ENCODE measurements at regions of chr10 and their contacts with region 1.

Region 1: DNA sequence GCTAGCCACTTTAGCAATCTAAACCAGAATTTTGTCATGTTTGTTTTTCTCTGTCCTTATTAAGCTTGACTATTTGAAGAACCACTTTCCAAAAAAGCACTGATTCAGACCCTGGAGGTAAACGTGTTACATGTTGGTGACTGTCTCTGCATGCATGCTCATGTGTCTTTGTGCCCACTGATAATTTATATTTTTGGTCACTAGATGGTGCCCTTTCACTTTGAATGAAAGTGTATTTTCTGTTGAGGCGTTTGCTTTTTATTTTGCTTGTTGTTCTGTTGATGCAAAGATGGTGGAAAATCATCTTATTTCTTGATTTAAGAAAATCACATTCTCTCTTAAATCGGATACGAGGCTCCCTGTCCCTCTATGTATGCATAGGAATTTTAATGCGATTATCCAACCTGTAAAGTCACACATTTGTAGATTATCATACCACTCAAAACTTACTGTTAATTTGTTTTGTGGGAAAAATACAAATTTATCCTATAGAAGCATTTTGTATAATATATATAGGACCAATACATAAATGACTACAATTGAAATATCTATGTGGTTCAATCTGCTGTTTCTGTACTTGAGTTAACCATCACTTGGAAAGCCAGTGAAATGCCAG is 269.3 kb downstream of the BICC1 start:
- DNase-seq: peak; percentile 63
- H3K4me3 ChIP-seq: no peak overlapping the region
- H3K27ac ChIP-seq: no peak overlapping the region
- H3K4me1 ChIP-seq: no peaks in the 10 kb centered on the region
- H3K27me3 ChIP-seq: no peaks in the 10 kb centered on the region
- CTCF ChIP-seq: peak; percentile 67

Region 2: GRCh38 chr10:58796242-58796641 is 14.3 kb after region 1 on chr10:
- CTCF ChIA-PET with region 1: no interaction called
- POLR2A ChIA-PET with region 1: no interaction called
- intact Hi-C with region 1: no loop called
- DNase-seq: no peak
- H3K4me3 ChIP-seq: no peak overlapping the region
- H3K27ac ChIP-seq: no peak overlapping the region
- H3K4me1 ChIP-seq: no peaks in the 10 kb centered on the region
- H3K27me3 ChIP-seq: no peaks in the 10 kb centered on the region
- CTCF ChIP-seq: no peak

Region 3: GRCh38 chr10:58952747-58953466 is 170.9 kb after region 1 on chr10:
- CTCF ChIA-PET with region 1: no interaction called
- POLR2A ChIA-PET with region 1: no interaction called
- intact Hi-C with region 1: loop called (anchors 5 kb)
- DNase-seq: peak; percentile 57
- H3K4me3 ChIP-seq: no peak overlapping the region
- H3K27ac ChIP-seq: no peak overlapping the region
- H3K4me1 ChIP-seq: no peaks in the 10 kb centered on the region
- H3K27me3 ChIP-seq: no peaks in the 10 kb centered on the region
- CTCF ChIP-seq: peak; percentile 85

Region 4: GRCh38 chr10:59227136-59227673 is 445.2 kb after region 1 on chr10:
- CTCF ChIA-PET with region 1: no interaction called
- POLR2A ChIA-PET with region 1: no interaction called
- intact Hi-C with region 1: loop called (anchors 5 kb)
- DNase-seq: peak; percentile 12
- H3K4me3 ChIP-seq: no peak overlapping the region
- H3K27ac ChIP-seq: no peak overlapping the region
- H3K4me1 ChIP-seq: no peaks in the 10 kb centered on the region
- H3K27me3 ChIP-seq: no peaks in the 10 kb centered on the region
- CTCF ChIP-seq: peak; percentile 29; the same call in 1 of the 2 replicates

Region 5: DNA sequence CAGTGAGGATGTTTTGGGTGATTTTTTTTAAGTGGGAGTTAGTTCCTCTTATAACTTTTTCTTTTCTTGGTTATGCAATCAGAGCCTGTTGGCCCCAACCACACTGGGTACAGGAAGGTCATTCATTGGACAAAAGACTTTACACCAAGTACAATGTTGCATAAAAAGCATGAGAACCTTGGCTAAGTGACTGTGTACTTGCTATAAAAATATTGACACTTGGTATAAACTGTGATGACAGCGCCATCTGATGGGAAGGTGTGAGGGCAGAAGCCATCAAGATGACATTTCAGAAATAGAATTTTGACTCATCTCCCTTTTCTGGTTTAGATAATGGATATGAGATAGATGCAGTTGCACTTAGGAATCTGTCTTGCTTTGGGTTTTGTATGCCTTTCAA is 1250.7 kb after region 1 on chr10:
- CTCF ChIA-PET with region 1: no interaction called
- POLR2A ChIA-PET with region 1: no interaction called
- intact Hi-C with region 1: loop called (anchors 2 kb)
- DNase-seq: peak; percentile 73
- H3K4me3 ChIP-seq: no peak overlapping the region
- H3K27ac ChIP-seq: no peak overlapping the region
- H3K4me1 ChIP-seq: peaks cover 20% of the 10 kb centered on the region
- H3K27me3 ChIP-seq: peaks cover 49% of the 10 kb centered on the region
- CTCF ChIP-seq: peak; percentile 80

Measured in A673 (cell line).